ENCODE measurements at regions of chr1 and their contacts with region 1.

Region 1: DNA sequence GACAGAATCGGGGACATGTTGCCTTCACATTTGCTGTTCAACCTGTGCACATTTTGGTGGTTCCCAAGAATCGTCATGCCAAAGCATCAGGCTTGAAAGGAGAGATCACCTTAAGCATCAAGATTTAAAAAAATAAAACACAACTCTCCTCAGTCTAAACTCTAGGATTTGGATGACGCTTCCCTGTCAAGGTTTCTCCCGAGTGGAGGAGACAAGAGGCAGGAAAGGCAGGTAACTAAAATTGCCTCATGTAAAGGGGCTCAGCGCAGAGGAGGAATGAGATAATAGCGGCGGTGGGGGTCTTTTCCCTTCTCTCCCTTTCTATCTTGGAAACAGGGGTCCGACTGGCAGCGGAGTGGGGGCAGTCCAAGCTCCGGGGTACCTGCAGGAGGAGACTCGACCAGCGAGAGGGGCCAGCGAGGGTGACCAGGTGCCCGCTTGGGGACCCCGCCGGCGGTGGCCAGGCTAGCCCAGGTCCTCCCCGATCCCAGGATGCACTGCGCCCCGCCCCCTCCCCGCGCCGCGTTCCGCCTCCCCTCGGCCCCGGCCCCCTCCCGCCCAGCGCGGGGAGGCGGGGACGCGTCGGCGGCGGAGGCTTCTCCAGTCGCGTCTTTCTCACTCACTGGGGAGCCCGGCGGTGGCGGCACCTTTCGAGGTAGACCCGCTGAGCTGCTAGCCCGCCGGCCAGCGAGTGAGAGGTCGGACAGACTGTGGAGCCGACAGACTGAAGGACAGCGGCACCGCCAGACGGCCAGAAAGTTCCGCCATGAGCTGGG is at the start of gene FNBP1L:
- DNase-seq: peak; percentile 62 to 63
- ATAC-seq: peak; percentile 59
- H3K4me3 ChIP-seq: peak within 1 kb of the TSS; percentile 84 to 94 (median 90)
- H3K27ac ChIP-seq: peak within 1 kb of the TSS; percentile 85 to 98 (median 88)
- H3K4me1 ChIP-seq: peaks cover 14 to 15% of the 10 kb centered on the region in 2 donors
- H3K27me3 ChIP-seq: no peaks in the 10 kb centered on the region
- CTCF ChIP-seq: no peak
- POLR2A ChIP-seq: peak; percentile 82 to 83
- total RNA-seq, gene FNBP1L: 16.0 to 35.1 (median 17.4) TPM

Region 2: GRCh38 chr1:93078986-93079654 is 368.6 kb before region 1 on chr1 and contains the start of gene MTF2:
- in situ Hi-C with region 1: no loop called
- intact Hi-C with region 1: loop called (anchors 10 kb)
- DNase-seq: peak; percentile 86 to 91
- ATAC-seq: peak; percentile 92 to 94
- H3K4me3 ChIP-seq: peak within 1 kb of the TSS; percentile 74 to 96 (median 96)
- H3K27ac ChIP-seq: peak within 1 kb of the TSS; percentile 83 to 90 (median 89)
- H3K4me1 ChIP-seq: peaks cover 23 to 26% of the 10 kb centered on the region in 2 donors
- H3K27me3 ChIP-seq: no peaks in the 10 kb centered on the region
- CTCF ChIP-seq: no peak
- POLR2A ChIP-seq: peak; percentile 57 to 67
- total RNA-seq, gene MTF2: 5.9 to 11.7 (median 9.5) TPM

Region 3: DNA sequence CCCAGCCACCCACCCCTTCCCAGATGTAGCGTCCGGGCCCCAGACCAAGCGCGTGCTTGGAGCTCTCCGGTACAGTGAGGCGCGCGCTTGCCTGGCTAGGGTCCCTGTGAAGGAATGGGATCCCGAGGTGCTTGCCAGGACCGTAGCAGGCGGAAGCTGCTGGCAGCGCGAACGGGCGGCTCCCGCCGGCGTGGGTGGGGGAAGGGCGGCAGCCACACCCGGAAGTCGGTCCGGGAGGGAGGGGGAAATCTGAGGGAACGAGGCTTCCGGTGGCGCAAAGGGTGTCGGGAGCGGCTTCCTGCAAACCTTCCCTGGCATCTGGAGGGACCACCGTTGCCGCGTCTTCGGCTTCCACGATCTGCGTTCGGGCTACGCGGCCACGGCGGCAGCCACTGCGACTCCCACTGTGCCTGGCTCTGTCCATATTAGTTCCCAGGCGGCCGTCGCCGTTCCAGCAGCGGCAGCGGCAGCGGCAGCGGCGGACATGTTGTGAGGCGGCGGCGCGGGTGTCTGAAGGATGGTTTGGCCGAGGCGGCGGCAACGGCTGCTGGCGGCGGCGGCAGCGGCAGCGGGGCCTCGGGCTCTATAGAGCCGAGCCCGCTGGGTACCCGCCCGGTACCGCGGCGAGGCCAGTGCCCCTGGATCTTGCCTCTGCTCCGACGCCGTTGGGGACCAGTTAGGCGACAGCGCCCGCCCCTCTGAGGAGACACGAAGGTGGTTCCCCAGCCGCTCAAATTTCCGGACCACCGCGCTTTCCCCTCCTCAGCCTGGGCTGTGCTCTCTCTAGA is 101.9 kb before region 1 on chr1 and contains the start of gene DR1:
- in situ Hi-C with region 1: no loop called
- intact Hi-C with region 1: loop called (anchors 2 kb)
- DNase-seq: peak; percentile 93 to 97
- ATAC-seq: peak; percentile 88 to 94
- H3K4me3 ChIP-seq: peak within 1 kb of the TSS; percentile 82 to 97 (median 94)
- H3K27ac ChIP-seq: peak within 1 kb of the TSS; percentile 95 to 98 (median 96)
- H3K4me1 ChIP-seq: peaks cover 24 to 39% of the 10 kb centered on the region in 2 donors
- H3K27me3 ChIP-seq: no peaks in the 10 kb centered on the region
- CTCF ChIP-seq: no peak
- POLR2A ChIP-seq: peak; percentile 80 to 83
- total RNA-seq, gene DR1: 26.8 to 59.1 (median 37.9) TPM

Region 4: DNA sequence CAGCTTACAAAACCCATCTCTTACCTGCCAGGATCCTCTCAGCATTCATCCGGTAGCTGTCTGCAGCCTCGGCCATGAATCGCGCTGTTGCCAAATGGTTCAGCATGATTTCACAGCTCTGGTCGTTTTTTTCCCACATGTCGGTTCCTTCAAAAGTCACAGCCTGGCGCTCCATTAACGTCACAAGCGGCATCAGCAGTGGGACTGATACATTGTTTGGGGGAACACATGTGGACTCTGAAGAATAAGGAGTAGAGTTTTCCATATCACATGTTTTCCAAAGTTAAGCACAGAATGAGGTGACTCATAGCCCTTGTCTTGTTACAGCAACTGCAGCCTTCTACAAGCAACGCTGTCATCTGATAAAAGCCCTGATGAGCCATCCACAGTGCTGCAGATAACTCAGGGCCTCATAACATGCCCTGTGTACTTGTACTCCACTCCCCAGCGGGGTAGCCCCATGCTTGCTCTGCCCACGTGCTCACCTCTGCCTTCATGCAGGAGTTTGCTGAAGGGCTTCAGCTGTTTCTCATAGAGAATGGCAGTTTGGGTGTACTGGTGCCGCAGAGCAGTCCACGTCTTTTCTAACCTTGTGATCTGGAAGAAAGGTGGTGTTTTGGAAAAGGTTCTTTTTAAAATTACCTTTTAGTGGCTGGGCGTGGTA is 119.7 kb after region 1 on chr1:
- in situ Hi-C with region 1: no loop called
- intact Hi-C with region 1: loop called (anchors 5 kb)
- DNase-seq: peak; percentile 70 to 82
- ATAC-seq: peak; percentile 96 to 98
- H3K4me3 ChIP-seq: no peak overlapping the region
- H3K27ac ChIP-seq: peak overlapping the region; percentile 73 to 94 (median 87)
- H3K4me1 ChIP-seq: peaks cover 16 to 17% of the 10 kb centered on the region in 2 donors
- H3K27me3 ChIP-seq: no peaks in the 10 kb centered on the region
- CTCF ChIP-seq: peak in 1 of 5 experiments; percentile 16
- POLR2A ChIP-seq: peak; percentile 44 to 73

Region 5: GRCh38 chr1:93615582-93616150 is 168.0 kb after region 1 on chr1:
- in situ Hi-C with region 1: loop called (anchors 10 kb)
- intact Hi-C with region 1: no loop called
- DNase-seq: no peak
- ATAC-seq: no peak
- H3K4me3 ChIP-seq: no peak overlapping the region
- H3K27ac ChIP-seq: peak overlapping the region; percentile 84 to 90 (median 87)
- H3K4me1 ChIP-seq: peaks cover 58 to 71% of the 10 kb centered on the region in 2 donors
- H3K27me3 ChIP-seq: no peaks in the 10 kb centered on the region
- CTCF ChIP-seq: no peak
- POLR2A ChIP-seq: no peak

Region 6: DNA sequence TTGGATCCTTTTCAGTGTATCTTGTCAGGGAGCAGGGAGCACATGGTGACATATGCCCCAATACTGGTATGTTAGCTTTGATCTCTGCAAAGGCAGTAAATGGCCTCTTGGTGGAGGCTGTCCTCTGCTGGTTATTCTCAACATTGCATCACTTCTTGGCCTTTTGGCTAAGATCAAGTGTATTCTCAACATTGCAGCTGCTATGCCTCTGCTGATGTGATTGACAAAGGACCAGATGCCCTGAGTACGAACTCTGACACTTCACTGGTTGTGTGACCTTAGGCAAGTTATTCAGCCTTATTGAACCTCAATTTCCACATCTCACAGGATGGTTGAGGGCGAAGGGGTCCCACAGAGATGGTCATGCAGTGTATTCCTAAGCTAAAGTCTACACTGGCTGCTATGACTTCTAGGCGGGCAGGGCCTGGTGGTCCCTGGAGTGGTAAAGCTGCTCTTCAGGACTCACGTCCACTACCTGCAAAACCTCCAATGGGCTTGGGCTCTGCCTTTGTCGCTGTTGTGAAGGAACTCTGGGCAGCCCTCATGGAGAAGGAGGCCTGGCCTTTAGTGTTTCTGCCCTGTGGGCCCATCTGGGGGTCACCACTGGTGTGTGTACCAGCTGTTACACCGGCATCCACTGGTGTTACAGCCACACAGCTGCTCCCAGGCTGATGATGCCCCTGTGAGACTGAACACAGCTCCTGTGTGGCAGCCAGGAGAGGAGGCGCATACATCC is 366.5 kb after region 1 on chr1:
- in situ Hi-C with region 1: loop called in 1 of 4 experiments (anchors 10 kb)
- intact Hi-C with region 1: no loop called
- DNase-seq: peak; percentile 17 to 39
- ATAC-seq: peak; percentile 84 to 90
- H3K4me3 ChIP-seq: no peak overlapping the region
- H3K27ac ChIP-seq: no peak overlapping the region
- H3K4me1 ChIP-seq: peaks cover 0 to 3% of the 10 kb centered on the region in 2 donors
- H3K27me3 ChIP-seq: no peaks in the 10 kb centered on the region
- CTCF ChIP-seq: peak; percentile 84 to 93 (median 92)
- POLR2A ChIP-seq: no peak